ENCODE measurements at regions of chr17 and their contacts with region 1.

Region 1: DNA sequence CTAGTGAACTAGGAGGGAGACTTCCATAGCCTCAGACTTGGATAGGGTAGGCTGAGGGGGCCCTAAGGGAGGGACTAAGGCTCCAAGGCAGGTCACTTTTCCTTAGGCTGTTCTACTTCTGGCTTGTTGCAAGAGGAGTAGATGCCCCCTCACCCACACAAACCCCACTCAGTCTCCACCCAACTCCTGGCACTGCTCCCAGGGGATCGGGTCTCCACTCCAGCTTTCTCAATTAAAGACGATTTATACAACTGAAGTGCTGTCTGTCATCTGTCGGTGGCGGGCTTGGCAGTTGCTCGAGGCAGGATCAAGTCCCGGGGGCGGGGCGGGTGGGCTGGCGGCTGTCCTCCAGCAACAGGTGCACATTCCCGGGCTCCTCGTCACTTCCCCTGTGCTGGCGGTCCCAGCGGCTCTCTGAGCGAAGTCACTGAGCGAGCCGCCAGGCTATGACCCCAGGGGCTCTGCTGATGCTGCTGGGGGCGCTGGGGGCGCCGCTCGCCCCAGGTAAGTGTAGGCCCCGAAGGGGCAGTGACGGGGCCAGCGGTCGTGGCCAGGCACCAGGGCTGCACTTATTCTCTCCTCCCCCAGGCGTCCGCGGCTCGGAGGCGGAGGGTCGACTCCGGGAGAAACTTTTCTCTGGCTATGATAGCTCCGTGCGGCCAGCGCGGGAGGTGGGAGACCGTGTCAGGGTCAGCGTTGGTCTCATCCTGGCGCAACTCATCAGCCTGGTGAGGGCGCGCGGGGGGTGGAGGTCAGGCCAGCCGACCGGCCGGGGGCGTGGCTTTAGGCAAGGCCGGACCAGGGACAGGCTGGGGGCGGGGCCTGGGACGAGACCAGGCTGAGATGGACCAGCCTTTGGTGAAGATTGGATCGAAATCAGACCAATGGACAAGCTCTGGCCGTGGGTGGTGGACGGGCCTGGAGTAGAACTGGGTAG is at the start of gene CHRNB1:
- DNase-seq: no peak
- ATAC-seq: peak; percentile 40
- H3K4me3 Mint-ChIP-seq: peak within 1 kb of the TSS; percentile 60
- H3K27ac Mint-ChIP-seq: no peak within 1 kb of the TSS
- H3K4me1 Mint-ChIP-seq: peaks cover 22% of the 10 kb centered on the region
- H3K27me3 Mint-ChIP-seq: peaks cover 59% of the 10 kb centered on the region
- total RNA-seq, gene CHRNB1: 10.4 to 13.1 TPM

Region 2: DNA sequence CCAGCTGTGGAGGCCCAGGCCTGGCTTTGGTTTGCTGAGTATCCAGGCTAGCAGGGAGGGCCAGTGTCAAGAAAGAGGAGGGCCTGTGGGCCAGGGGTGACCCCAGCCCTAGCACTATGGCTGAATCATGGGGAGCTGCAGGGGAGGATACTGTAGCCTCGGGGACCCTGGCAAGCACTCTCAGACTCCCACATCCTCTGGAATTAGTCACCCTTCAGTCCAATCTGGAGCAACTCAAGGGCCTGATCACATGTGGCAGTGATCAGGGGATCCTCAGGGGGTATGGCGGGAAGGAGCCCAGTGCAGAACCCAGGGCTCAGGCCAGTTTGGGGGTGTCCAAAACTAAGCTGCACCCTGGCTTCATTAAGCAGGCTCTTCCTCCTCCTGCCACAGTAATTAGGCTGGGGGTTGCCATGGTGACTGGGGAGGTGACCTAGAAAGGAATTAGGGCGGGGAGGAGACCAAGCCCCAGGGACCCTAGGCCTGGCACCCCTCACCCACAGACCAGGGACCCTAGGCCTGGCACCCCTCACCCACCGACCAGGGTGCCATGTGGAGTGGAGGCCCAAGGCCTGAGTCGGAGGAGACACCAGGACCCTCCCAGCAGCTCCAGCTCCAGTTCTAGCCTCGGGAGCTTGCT is 31.5 kb before region 1 on chr17:
- CTCF ChIA-PET with region 1: no interaction called
- DNase-seq: no peak
- ATAC-seq: no peak
- H3K4me3 Mint-ChIP-seq: no peak overlapping the region
- H3K27ac Mint-ChIP-seq: no peak overlapping the region
- H3K4me1 Mint-ChIP-seq: no peaks in the 10 kb centered on the region
- H3K27me3 Mint-ChIP-seq: no peaks in the 10 kb centered on the region

Region 3: DNA sequence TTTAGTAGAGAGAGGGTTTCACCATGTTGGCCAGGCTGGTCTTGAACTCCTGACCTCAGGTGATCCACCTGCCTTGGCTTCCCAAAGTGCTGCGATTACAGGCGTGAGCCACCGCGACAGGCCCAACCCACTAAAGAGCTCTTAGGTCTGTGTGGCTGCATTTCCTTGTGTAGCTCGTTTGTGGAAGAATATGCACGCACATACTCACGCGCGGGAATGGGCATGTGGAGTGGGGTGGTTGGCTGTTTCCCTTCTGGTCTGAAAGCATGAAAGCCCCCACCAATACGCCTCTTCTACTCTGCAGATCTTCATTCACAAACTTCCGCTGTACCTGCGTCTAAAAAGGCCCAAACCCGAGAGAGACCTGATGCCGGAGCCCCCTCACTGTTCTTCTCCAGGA is 10.0 kb after region 1 on chr17:
- CTCF ChIA-PET with region 1: interaction called, 15 read pairs
- DNase-seq: no peak
- ATAC-seq: no peak
- H3K4me3 Mint-ChIP-seq: peak overlapping the region; percentile 99
- H3K27ac Mint-ChIP-seq: peak overlapping the region; percentile 99
- H3K4me1 Mint-ChIP-seq: peaks cover 23% of the 10 kb centered on the region
- H3K27me3 Mint-ChIP-seq: no peaks in the 10 kb centered on the region